Breast epithelium (tissue), 4 donors: ENCODE measurements at regions of chr3 and their contacts with region 1.

Region 1: DNA sequence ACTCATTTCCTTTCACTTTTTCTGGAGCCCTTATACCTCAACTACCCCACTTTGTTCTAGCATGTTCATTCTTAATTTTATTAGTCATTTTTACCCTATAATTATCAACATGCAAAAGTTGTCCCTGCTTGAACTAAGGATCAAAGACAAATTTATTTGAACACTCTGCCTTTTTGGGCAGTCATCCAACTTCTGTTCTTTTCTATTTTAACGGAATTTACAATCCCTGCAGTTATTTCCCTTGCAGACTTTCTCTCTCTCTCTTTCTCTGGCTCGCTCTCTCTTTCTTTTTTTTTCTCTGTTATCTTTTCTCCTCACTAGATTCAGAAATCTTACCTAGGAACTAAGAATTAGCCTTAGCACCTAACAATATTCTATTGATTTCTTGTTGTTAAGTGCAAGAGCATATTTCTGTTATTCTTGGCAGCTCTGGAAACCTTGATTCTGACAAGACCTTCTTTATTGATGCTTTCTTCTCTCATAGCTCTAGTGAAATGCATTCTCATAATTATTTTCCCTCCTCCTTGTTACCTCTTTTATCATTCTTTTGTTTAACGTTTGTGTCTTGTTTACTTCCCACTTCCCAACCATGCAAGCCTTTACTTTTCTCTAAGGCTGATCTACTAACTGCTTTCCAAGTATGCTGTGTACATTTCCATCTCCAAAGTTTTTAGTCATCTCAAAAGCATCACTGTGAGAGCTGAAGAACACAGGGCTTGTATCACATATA is 951.6 kb downstream of the DIPK2A start:
- DNase-seq: no peak
- H3K4me3 ChIP-seq: no peak overlapping the region
- H3K27ac ChIP-seq: no peak overlapping the region
- H3K4me1 ChIP-seq: no peaks in the 10 kb centered on the region
- H3K27me3 ChIP-seq: no peaks in the 10 kb centered on the region
- CTCF ChIP-seq: no peak
- POLR2A ChIP-seq: no peak

Region 2: GRCh38 chr3:144963810-144964209 is 40.6 kb after region 1 on chr3:
- intact Hi-C with region 1: loop called (anchors 5 kb)
- DNase-seq: no peak
- H3K4me3 ChIP-seq: no peak overlapping the region
- H3K27ac ChIP-seq: no peak overlapping the region
- H3K4me1 ChIP-seq: no peaks in the 10 kb centered on the region
- H3K27me3 ChIP-seq: no peaks in the 10 kb centered on the region
- CTCF ChIP-seq: no peak
- POLR2A ChIP-seq: no peak

Region 3: DNA sequence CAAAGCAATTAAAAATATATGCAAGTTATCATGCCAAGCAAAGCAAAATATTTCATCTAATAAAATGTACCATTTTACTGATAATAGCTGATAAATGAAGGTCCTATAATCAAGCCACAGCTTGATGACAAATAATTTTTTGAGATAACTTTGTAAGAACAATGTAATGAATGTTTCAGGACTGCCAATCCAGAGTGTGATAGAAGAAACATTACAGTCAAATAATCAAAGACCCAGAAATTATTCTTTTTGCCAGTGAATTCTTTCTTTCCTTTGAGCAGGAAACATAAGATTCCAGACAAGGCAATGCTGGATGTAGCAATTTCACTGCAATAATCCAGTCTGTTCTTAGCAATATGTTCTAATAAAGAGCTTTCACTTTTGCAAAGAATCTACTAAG is 681.6 kb after region 1 on chr3:
- intact Hi-C with region 1: no loop called
- DNase-seq: no peak
- H3K4me3 ChIP-seq: no peak overlapping the region
- H3K27ac ChIP-seq: no peak overlapping the region
- H3K4me1 ChIP-seq: no peaks in the 10 kb centered on the region
- H3K27me3 ChIP-seq: no peaks in the 10 kb centered on the region
- CTCF ChIP-seq: no peak
- POLR2A ChIP-seq: no peak